Activated B cell treated with CpG ODN at 0.5 μM for 24 hours (primary cell): ENCODE measurements at regions of chr7 and their contacts with region 1.

Region 1: DNA sequence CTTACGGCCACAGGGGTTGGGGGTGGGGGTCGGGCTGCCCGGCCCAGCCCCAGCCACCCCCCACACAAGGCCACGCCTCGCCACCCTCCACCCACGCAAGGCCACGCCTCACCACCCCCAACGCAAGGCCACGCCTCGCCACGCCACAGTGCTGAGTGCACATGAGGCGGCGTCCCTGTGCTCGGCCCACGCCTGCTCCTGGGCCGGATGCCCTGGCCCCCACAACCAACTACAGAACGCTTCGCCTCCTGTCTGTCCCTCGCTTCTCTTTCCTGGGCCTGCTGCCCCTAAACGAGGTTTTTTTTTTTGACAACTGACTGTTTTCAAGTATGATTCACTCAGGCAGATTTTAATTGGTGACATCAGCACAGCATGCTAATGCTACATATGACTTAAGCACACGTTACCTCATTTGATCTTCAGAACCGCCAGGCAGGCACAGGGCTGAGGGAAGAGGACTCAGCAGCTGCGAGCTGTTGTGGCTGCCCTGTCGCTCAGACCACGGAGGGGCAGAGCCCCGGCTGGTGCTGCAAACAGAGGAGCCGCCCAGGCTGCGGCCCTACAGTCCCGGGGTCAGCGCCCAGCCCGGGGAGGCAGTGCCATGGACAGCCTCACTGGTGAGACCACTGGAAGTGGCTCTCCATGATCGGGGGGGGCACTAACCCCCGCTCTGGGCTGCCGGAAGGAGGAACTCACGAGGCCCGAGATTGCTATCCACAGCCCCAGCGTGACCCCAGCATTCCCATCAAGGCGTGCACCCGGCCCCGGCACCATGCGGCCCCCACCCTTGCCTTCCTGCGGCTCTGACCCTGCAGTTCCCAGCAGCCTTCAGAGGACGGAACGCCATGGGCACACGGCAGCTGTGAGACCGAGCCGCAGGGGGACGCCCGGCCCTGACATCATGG is 212.9 kb downstream of the MAD1L1 start:
- DNase-seq: peak; percentile 71
- ATAC-seq: peak; percentile 86
- H3K4me3 Mint-ChIP-seq: peak overlapping the region; percentile 77
- H3K27ac Mint-ChIP-seq: peak overlapping the region; percentile 90
- H3K4me1 Mint-ChIP-seq: peaks cover 54% of the 10 kb centered on the region
- H3K27me3 Mint-ChIP-seq: no peaks in the 10 kb centered on the region
- CTCF ChIP-seq: no peak

Region 2: GRCh38 chr7:1664711-1665548 is 354.9 kb before region 1 on chr7:
- CTCF ChIA-PET with region 1: no interaction called
- POLR2A ChIA-PET with region 1: no interaction called
- intact Hi-C with region 1: loop called (anchors 2 kb)
- DNase-seq: peak; percentile 47
- ATAC-seq: no peak
- H3K4me3 Mint-ChIP-seq: peak overlapping the region; percentile 38
- H3K27ac Mint-ChIP-seq: no peak overlapping the region
- H3K4me1 Mint-ChIP-seq: peaks cover 12% of the 10 kb centered on the region
- H3K27me3 Mint-ChIP-seq: peaks cover 37% of the 10 kb centered on the region
- CTCF ChIP-seq: no peak

Region 3: DNA sequence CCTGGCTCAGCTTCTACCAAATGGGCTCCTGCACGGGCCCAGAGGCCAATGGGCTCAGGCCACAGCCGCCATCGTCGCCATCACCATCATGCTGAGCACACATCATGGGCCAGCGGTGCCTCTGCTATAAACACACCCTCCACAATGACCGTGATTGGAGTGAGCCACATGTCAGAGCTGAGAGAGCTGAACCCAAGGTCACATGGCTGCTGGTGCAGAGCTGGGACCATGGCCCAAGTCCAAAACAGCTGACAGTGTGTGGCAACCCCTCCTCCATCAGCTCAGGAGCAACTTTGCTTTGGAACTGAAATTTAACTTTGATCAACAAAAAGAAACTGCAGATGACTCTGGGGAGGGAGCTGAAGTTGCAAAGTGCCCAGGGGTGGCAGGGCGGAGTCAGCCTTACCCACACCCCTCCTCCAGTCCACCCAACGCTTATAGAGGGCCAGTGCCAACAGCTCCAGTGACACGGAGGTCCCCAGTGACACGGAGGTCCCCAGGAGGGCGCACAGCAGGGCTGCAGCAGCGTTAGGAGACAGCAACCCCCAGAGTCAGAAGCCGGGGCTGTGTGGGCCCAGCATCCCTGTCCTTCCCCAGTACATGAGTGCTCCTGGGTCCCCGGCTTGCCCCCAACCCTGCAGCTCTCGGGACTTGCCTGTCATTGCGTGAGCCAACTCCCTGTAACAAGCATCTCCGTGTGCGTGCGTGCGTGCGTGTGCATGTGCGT is 100.2 kb before region 1 on chr7:
- CTCF ChIA-PET with region 1: no interaction called
- POLR2A ChIA-PET with region 1: no interaction called
- intact Hi-C with region 1: loop called (anchors 5 kb)
- DNase-seq: no peak
- ATAC-seq: peak; percentile 32
- H3K4me3 Mint-ChIP-seq: peak overlapping the region; percentile 78
- H3K27ac Mint-ChIP-seq: no peak overlapping the region
- H3K4me1 Mint-ChIP-seq: peaks cover 30% of the 10 kb centered on the region
- H3K27me3 Mint-ChIP-seq: no peaks in the 10 kb centered on the region
- CTCF ChIP-seq: no peak

Region 4: DNA sequence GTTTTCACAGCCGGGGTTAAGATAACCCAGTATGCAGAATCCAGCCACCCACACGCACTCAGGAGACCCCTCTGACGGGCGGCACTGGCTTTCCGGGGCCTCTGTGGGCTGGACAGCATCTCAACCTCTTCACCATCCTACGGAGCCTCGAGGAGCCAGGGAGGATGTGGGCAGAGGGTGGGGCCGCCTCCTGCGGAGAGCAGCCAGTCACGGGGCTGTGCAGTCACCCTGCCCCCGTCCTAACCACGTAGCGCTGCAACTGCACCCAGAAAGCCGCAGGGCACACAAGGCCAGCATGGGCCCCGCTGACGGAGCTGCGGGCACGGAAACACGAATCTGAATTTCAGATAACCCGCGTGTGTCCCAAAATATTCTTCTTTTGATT is 79.5 kb before region 1 on chr7:
- CTCF ChIA-PET with region 1: no interaction called
- POLR2A ChIA-PET with region 1: interaction called, 11 read pairs
- intact Hi-C with region 1: loop called (anchors 1 kb)
- DNase-seq: peak; percentile 70
- ATAC-seq: peak; percentile 97
- H3K4me3 Mint-ChIP-seq: peak overlapping the region; percentile 84
- H3K27ac Mint-ChIP-seq: peak overlapping the region; percentile 91
- H3K4me1 Mint-ChIP-seq: peaks cover 41% of the 10 kb centered on the region
- H3K27me3 Mint-ChIP-seq: no peaks in the 10 kb centered on the region
- CTCF ChIP-seq: no peak

Region 5: GRCh38 chr7:2001581-2002442 is 18.0 kb before region 1 on chr7:
- CTCF ChIA-PET with region 1: no interaction called
- POLR2A ChIA-PET with region 1: no interaction called
- intact Hi-C with region 1: no loop called
- DNase-seq: no peak
- ATAC-seq: no peak
- H3K4me3 Mint-ChIP-seq: no peak overlapping the region
- H3K27ac Mint-ChIP-seq: no peak overlapping the region
- H3K4me1 Mint-ChIP-seq: peaks cover 36% of the 10 kb centered on the region
- H3K27me3 Mint-ChIP-seq: no peaks in the 10 kb centered on the region
- CTCF ChIP-seq: no peak

Region 6: DNA sequence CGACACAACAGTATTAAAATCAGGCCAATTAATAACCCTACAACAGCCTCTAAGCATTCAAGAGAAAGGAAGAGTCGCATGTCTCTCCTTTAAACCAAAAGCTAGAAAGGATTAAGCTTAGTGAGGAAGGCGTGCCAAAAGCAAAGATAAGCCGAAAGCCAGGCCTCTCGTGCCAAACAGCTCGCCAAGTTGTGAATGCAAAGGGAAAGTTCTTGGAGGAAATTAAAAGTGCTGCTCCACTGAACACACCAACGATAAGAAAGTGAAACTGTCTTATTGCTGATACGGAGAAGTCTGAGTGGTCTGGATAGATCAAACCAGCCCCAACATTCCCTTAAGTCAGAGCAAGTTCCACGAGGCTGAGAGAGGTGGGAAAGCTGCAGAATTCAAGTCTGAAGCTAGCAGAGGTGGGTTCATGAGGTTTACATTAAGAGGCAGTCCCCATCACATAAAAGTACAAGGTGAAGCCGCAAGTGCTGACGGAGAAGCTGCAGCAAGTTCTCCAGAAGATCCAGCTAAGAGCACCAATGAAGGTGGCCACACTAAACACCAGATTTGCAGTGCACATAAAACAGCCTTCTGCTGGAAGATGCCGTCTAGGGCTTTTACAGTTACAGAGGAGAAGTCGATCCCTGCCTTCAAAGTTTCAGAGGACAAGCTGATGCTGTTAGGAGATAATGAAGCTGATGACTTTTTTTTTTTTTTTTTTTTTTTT is 18.1 kb after region 1 on chr7:
- CTCF ChIA-PET with region 1: no interaction called
- POLR2A ChIA-PET with region 1: interaction called, 11 read pairs
- intact Hi-C with region 1: loop called (anchors 1 kb)
- DNase-seq: no peak
- ATAC-seq: peak; percentile 79
- H3K4me3 Mint-ChIP-seq: peak overlapping the region; percentile 86
- H3K27ac Mint-ChIP-seq: peak overlapping the region; percentile 86
- H3K4me1 Mint-ChIP-seq: peaks cover 67% of the 10 kb centered on the region
- H3K27me3 Mint-ChIP-seq: no peaks in the 10 kb centered on the region
- CTCF ChIP-seq: no peak

Region 7: GRCh38 chr7:2072042-2072441 is 52.2 kb after region 1 on chr7:
- CTCF ChIA-PET with region 1: no interaction called
- POLR2A ChIA-PET with region 1: no interaction called
- intact Hi-C with region 1: loop called (anchors 2 kb)
- DNase-seq: peak; percentile 33
- ATAC-seq: peak; percentile 94
- H3K4me3 Mint-ChIP-seq: peak overlapping the region; percentile 59
- H3K27ac Mint-ChIP-seq: peak overlapping the region; percentile 79
- H3K4me1 Mint-ChIP-seq: peaks cover 54% of the 10 kb centered on the region
- H3K27me3 Mint-ChIP-seq: no peaks in the 10 kb centered on the region
- CTCF ChIP-seq: no peak